ENCODE measurements at regions of chr9 and their contacts with region 1.

Region 1: DNA sequence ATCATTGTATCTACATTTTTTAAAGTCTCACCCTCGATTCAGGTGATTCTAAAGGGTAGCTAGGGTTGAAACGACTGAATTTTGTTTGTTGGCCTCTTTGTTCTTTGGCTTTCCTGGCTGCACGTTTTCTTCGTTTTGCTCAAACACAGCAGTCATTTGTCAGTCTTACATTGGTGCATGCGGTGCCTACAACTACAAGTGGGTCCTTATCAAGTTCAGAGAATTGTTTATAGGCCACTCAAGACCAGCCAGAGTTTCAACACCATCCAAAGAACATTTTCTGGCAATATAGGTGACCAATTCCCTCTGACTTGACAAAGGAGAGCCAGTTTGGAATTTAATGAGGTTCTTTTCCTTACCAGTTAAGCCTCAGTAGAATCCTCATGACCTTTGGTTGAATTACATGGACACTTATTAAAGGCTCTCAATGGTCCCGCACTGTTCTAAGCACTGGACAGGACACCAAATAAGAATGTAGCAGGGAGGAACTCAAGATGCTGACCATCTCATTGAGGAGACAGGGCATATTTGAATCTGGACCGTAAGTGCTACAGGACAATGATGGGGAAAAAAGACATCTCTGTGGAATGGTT is 119.0 kb upstream of the DMRT1 start:
- DNase-seq: no peak
- H3K4me3 ChIP-seq: no peak overlapping the region
- H3K27ac ChIP-seq: no peak overlapping the region
- H3K4me1 ChIP-seq: no peaks in the 10 kb centered on the region
- H3K27me3 ChIP-seq: no peaks in the 10 kb centered on the region

Region 2: DNA sequence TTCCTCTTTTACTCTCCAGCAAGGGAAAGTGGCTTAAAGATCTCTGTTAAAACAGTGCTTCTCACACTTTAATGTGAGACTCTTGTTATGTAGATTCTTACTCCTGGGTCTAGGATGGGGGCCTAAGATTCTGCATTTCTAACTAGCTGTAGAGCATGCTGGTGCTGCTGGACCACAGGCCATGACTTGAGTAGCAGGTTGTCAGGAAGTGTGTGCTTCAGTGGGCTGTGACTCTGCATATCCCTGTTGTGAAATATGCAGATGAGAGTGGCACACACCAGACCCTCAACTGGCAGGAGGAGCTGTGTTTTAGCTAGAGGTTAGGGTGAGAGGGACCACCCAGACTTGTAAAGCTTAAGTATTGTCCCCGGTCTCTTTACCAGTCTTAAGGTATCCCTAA is 72.1 kb before region 1 on chr9:
- CTCF ChIA-PET with region 1: no interaction called
- POLR2A ChIA-PET with region 1: no interaction called
- DNase-seq: peak; percentile 56 to 89 (median 83)
- H3K4me3 ChIP-seq: peak overlapping the region in 1 of 7 experiments; percentile 33
- H3K27ac ChIP-seq: peak overlapping the region in 1 of 2 experiments; percentile 35
- H3K4me1 ChIP-seq: peaks cover 12 to 54% (median 35%) of the 10 kb centered on the region in 4 experiments
- H3K27me3 ChIP-seq: no peaks in the 10 kb centered on the region

Region 3: GRCh38 chr9:710951-711745 is 11.3 kb before region 1 on chr9:
- CTCF ChIA-PET with region 1: interaction called, 10 read pairs
- POLR2A ChIA-PET with region 1: no interaction called
- DNase-seq: peak in 1 of 3 donors; percentile 23
- H3K4me3 ChIP-seq: no peak overlapping the region
- H3K27ac ChIP-seq: no peak overlapping the region
- H3K4me1 ChIP-seq: peaks cover 2 to 36% (median 13%) of the 10 kb centered on the region in 4 experiments
- H3K27me3 ChIP-seq: no peaks in the 10 kb centered on the region